ENCODE measurements at regions of chr5 and their contacts with region 1.

Region 1: DNA sequence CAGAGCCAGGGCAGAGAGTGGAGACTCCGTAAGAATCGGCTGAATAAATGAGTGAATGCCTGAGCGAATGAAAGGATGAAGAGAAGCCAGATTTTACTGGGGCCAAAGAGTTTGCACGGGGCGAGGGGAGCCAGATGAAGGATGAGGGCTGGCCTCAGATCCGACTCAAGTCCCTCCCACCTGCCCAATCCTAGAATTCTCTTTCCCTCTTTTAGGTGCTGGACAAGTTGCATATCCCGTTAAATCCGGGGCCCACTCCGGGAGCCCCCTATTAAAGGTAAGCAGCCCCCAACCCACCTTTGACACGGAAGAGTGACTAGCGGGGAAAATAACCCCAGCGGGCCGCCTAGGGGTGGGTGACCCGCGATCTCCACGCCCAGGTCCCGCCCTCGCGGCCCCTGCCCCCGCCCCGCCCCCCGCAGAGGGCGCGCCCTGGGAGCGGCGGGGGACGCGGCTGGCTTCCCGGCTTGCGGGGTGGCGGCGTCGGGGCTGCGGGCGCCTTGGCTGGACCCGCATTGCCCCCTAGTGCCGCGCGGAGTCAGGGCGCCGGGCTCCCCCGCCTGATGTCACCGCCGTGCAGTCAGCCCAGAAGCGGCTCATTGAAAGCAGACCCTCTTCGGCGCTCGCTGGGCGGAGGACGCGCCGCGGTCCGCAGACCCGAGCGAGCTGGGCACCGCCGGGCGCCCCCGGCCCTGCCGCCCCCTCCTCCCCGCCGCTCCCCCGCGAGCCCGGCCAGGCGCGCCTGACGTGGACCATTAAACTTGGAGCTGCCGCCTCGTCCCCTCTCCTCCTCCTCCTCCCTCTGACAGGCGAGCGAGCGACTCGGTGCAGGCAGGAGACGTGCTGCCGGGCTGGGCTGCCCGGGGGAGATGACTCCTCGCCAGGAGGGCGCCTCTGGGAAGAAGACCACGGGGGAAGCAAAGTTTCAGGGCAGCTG is at the start of gene ADRA1B:
- DNase-seq: peak; percentile 41
- H3K4me3 ChIP-seq: peak within 1 kb of the TSS; percentile 12 to 41 (median 33)
- H3K27ac ChIP-seq: no peak within 1 kb of the TSS
- H3K4me1 ChIP-seq: peaks cover 49% of the 10 kb centered on the region
- H3K27me3 ChIP-seq: no peaks in the 10 kb centered on the region
- CTCF ChIP-seq: peak; percentile 36 to 65
- total RNA-seq, gene ADRA1B: 0.67 to 0.80 TPM

Region 2: GRCh38 chr5:159286420-159287035 is 629.6 kb before region 1 on chr5:
- CTCF ChIA-PET with region 1: no interaction called
- dilution Hi-C with region 1: no loop called
- in situ Hi-C with region 1: no loop called
- intact Hi-C with region 1: loop called (anchors 5 kb)
- DNase-seq: peak; percentile 35
- H3K4me3 ChIP-seq: no peak overlapping the region
- H3K27ac ChIP-seq: no peak overlapping the region
- H3K4me1 ChIP-seq: no peaks in the 10 kb centered on the region
- H3K27me3 ChIP-seq: no peaks in the 10 kb centered on the region
- CTCF ChIP-seq: peak; percentile 30 to 57

Region 3: GRCh38 chr5:159444441-159445082 is 471.6 kb before region 1 on chr5:
- CTCF ChIA-PET with region 1: no interaction called
- dilution Hi-C with region 1: no loop called
- in situ Hi-C with region 1: loop called in 1 of 2 experiments (anchors 10 kb)
- intact Hi-C with region 1: loop called (anchors 1 kb)
- DNase-seq: peak; percentile 60
- H3K4me3 ChIP-seq: no peak overlapping the region
- H3K27ac ChIP-seq: no peak overlapping the region
- H3K4me1 ChIP-seq: no peaks in the 10 kb centered on the region
- H3K27me3 ChIP-seq: no peaks in the 10 kb centered on the region
- CTCF ChIP-seq: peak; percentile 30 to 54

Region 4: DNA sequence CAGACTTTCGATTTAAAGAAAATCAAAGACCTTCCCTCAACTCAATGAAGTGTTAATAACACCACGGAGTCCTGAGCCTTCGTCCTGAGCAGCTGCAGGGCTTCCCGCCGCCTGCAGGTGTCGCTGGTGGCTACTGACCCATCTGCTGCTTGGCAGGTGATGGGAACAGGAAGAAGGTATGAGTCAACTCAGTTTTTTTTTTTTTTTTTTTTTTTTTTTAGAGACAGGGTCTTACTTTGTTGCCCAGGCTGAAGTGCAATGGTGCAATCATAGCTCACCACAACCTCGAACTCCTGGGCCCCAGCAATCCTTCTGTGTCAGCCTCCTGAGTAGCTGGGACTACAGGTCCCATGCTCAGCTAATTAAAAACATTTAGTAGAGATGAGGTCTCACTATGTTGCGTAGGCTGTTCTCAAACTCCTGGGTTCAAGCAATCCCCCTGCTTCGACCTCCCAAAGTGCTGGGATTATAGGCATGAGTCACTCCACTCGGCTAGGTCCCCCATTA is 400.2 kb before region 1 on chr5:
- CTCF ChIA-PET with region 1: no interaction called
- dilution Hi-C with region 1: no loop called
- in situ Hi-C with region 1: no loop called
- intact Hi-C with region 1: loop called (anchors 1 kb)
- DNase-seq: peak; percentile 54
- H3K4me3 ChIP-seq: no peak overlapping the region
- H3K27ac ChIP-seq: no peak overlapping the region
- H3K4me1 ChIP-seq: peaks cover 14% of the 10 kb centered on the region
- H3K27me3 ChIP-seq: no peaks in the 10 kb centered on the region
- CTCF ChIP-seq: peak; percentile 95 to 98

Region 5: DNA sequence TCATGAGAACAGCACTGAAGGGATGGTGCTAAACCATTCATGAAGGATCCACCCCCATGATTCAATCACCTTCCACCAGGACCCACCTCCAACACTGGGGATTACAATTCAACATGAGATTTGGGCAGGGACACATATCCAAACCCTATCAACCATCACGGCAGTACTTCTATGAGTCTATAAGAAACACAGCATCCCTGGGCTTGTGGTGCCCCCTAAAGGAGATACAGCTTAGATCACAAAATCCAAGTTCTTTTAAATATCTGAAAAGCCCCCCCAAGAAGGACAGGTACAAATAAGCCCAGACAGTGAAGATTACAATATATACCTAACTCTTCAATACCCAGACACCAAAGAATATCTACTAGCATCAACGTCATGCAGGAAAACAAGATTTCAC is 233.5 kb before region 1 on chr5:
- CTCF ChIA-PET with region 1: no interaction called
- dilution Hi-C with region 1: no loop called
- in situ Hi-C with region 1: no loop called
- intact Hi-C with region 1: loop called (anchors 5 kb)
- DNase-seq: no peak
- H3K4me3 ChIP-seq: no peak overlapping the region
- H3K27ac ChIP-seq: no peak overlapping the region
- H3K4me1 ChIP-seq: no peaks in the 10 kb centered on the region
- H3K27me3 ChIP-seq: no peaks in the 10 kb centered on the region
- CTCF ChIP-seq: no peak

Measured in mammary epithelial cell (primary cell).